ENCODE measurements at regions of chr3 and their contacts with region 1.

Region 1: GRCh38 chr3:107124885-107125284 is 252.4 kb upstream of the CCDC54 start:
- DNase-seq: no peak
- ATAC-seq: no peak

Region 2: GRCh38 chr3:107092121-107092520 is 32.8 kb before region 1 on chr3:
- intact Hi-C with region 1: no loop called
- DNase-seq: no peak
- ATAC-seq: no peak

Region 3: DNA sequence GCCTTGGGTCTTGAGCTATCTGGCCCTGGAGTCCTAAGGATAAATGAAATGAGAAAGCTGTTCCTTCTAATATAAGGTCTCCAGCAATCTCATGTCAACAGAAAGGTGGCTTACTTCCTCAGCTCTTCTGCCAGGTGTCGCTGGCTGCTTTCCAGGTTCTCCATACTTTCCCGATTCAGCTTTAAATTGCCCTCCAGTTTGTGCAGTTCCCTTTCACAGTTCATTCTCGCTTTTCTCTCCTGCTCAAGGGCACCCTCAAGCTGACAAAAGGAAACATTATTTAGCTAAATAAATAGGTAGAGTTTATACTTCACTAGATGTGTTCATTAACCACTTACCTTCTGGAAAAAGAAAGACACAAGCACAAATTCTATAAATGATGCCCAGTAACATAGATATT is 1312.6 kb after region 1 on chr3:
- intact Hi-C with region 1: loop called (anchors 5 kb)
- DNase-seq: no peak
- ATAC-seq: no peak

Region 4: DNA sequence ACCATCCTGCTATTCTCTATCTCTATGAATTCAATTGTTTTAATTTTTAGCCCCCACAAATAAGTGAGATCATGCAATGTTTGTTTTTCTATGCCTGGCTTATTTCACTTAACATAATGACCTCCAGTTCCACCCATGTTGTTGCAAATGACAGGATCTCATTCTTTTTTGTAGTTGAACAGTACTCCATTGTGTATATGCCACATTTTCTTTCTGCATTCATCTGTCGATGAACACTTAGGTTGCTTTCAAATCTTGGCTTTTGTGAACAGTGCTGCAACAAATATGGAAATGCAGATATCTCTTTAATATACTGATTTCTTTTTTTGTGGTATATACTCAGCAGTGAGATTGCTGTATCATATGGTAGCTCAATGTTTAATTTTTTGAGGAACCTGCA is 1573.6 kb after region 1 on chr3:
- intact Hi-C with region 1: no loop called
- DNase-seq: no peak
- ATAC-seq: no peak

Measured in sciatic nerve (tissue), 2 donors.